Transverse colon (tissue), 4 donors: ENCODE measurements at regions of chr7 and their contacts with region 1.

Region 1: DNA sequence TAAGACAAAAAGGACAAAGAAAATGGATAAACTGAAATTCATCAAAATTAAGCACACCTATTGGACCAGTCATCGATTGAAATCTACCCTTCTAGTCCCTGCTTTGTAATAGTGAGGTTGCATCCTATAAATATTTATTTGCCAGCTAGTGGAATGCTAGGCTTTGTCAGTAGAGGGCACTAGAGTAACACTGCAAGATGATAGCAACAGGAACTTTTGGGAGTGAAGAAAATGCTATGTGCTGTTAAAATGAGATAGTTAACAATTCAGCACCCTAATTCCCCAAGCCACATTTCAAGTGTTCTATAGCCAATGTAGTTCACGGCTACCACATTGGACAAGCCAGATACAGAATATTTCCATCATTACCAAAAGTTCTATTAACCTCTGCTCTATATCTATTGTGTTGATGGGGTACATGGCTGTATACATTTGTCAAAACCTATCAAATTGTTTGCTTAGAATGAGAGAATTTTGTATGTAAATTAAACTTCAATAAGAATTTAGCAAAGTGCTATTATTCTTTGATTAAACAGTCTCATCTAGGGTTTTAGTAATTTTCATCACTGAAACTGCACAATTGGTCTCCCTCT is 69.8 kb downstream of the LSMEM1 start:
- DNase-seq: no peak
- H3K4me3 ChIP-seq: no peak overlapping the region
- H3K27ac ChIP-seq: no peak overlapping the region
- H3K4me1 ChIP-seq: no peaks in the 10 kb centered on the region
- H3K27me3 ChIP-seq: no peaks in the 10 kb centered on the region
- CTCF ChIP-seq: peak; percentile 85 to 91 (median 90)
- EP300 ChIP-seq: no peak
- POLR2A ChIP-seq: no peak

Region 2: DNA sequence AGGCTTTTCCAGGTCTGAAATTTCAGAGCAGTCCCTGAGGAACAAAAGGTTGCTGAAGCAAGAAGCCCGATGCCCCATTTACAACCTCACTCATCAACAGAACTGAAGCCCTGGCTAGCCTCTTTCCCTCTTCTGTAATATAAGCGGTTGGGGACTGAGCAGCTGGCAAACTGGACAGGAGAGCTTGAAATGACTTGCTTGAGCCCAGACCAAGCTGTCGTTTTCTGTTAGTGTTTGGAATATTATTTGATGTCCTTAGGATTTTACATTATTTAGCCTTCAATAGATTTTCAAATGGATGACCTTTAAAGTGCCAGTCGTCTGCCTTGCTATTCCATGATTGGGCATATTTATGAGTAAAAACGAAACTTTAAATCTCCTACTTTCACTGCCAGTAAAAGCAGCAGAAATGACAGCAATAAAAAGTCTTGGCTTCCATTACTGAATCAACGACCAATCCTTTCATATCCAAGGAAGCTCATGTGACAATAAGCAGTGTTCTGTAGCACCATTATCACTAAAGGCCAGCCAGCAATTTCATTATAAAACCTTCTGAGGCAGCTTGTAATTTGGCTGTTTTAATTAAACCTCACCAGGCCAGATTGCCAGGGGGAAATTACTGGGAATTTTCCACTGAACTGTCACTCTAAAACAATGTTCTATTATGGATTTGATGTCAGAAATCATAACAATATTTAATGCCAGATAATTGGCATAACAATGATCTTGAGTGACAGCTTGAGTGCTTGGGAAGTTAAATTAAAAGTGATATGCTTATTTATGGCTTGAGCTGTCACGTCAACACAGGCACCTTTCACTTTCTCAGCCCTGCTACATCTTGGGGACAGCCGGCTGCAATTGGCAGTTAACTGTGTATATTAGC is 16.1 kb after region 1 on chr7:
- in situ Hi-C with region 1: no loop called
- intact Hi-C with region 1: no loop called
- DNase-seq: peak; percentile 24
- H3K4me3 ChIP-seq: peak overlapping the region in 2 of 4 donors; percentile 3 to 17
- H3K27ac ChIP-seq: peak overlapping the region; percentile 48 to 68 (median 62)
- H3K4me1 ChIP-seq: peaks cover 0 to 35% (median 21%) of the 10 kb centered on the region in 4 donors
- H3K27me3 ChIP-seq: no peaks in the 10 kb centered on the region
- CTCF ChIP-seq: no peak
- EP300 ChIP-seq: no peak
- POLR2A ChIP-seq: no peak

Region 3: DNA sequence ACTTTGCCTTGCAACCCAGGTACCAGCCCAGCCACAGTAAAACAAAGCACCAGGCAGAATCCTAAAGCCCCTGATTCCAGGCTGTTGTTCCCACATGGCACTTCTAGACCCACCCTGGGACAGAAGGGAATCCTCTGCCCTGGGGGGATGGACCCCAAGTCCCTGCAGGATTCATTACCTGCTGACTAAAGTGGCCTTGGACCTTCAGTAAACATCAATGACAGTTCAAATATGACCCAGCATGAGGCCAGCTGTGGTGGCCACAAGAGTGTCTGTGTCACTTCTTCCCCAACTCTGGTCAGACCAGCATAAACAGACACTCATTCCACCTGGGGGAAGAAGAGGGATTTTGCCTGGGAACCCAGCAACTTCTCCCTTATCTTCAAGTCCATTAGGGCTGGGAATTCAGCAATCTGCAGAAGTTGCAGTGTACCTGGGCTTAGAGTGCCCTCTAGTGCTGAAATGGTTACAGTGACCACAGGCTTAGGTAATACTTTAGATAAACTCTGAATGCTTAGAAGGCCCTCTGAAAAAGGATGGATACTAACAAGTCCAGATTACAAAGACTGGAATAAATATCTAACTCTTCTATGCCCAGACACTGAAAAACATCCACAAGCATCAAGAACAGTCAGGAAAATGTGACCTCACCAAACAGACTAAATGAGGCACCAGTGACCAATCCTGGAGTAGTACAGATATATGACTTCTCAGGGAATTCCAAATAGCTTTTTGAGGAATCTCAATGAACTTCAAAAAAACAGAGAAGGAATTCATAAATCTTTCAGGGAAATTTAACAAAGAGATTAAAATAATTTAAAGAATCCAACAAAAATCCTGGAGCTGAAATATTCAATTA is 348.1 kb after region 1 on chr7:
- in situ Hi-C with region 1: loop called in 3 of 4 experiments (anchors 10 to 25 kb)
- intact Hi-C with region 1: no loop called
- DNase-seq: peak; percentile 63
- H3K4me3 ChIP-seq: no peak overlapping the region
- H3K27ac ChIP-seq: no peak overlapping the region
- H3K4me1 ChIP-seq: peaks cover 0 to 5% (median 2%) of the 10 kb centered on the region in 4 donors
- H3K27me3 ChIP-seq: no peaks in the 10 kb centered on the region
- CTCF ChIP-seq: peak; percentile 61 to 81 (median 72)
- EP300 ChIP-seq: no peak
- POLR2A ChIP-seq: no peak

Region 4: DNA sequence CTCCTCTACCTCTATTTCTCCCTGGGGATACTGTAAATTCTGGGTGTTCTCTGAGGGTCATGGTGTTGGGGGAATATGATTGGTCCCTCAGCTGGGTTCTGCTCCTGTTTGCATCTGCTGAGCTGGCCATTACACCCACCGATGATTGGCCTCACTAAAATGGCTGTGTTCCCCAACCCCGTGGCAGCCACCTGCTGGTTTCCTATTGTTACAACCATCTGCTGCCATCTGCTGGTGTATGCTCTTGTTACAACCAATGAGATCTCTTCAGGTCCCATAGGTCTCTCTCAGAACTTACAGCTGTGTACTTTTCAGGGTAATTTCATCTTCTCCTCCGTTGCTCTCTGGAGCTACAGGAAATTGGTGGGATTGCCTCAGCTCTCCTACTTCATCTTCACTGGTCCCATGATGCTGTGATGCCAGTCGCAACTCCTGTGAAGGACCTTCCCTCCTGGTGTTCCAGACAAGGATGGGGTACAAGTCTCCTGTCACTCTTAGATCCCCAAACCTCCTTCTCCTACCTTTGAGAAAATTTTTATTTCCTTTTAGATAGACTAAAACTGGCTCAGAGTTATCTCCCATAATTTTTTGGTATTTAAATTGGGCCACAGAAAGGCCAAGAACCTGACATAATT is 871.2 kb after region 1 on chr7:
- in situ Hi-C with region 1: loop called (anchors 10 to 25 kb)
- intact Hi-C with region 1: loop called (anchors 10 kb)
- DNase-seq: peak; percentile 77
- H3K4me3 ChIP-seq: no peak overlapping the region
- H3K27ac ChIP-seq: no peak overlapping the region
- H3K4me1 ChIP-seq: peaks cover 0 to 3% (median 0%) of the 10 kb centered on the region in 4 donors
- H3K27me3 ChIP-seq: no peaks in the 10 kb centered on the region
- CTCF ChIP-seq: peak; percentile 71 to 80 (median 77)
- EP300 ChIP-seq: no peak
- POLR2A ChIP-seq: no peak

Region 5: GRCh38 chr7:113460067-113460466 is 909.5 kb after region 1 on chr7:
- in situ Hi-C with region 1: no loop called
- intact Hi-C with region 1: no loop called
- DNase-seq: no peak
- H3K4me3 ChIP-seq: no peak overlapping the region
- H3K27ac ChIP-seq: no peak overlapping the region
- H3K4me1 ChIP-seq: no peaks in the 10 kb centered on the region
- H3K27me3 ChIP-seq: no peaks in the 10 kb centered on the region
- CTCF ChIP-seq: no peak
- EP300 ChIP-seq: no peak
- POLR2A ChIP-seq: no peak

Region 6: GRCh38 chr7:113710310-113711106 is 1159.9 kb after region 1 on chr7:
- in situ Hi-C with region 1: loop called in 1 of 4 experiments (anchors 25 kb)
- intact Hi-C with region 1: no loop called
- DNase-seq: peak; percentile 20
- H3K4me3 ChIP-seq: no peak overlapping the region
- H3K27ac ChIP-seq: no peak overlapping the region
- H3K4me1 ChIP-seq: no peaks in the 10 kb centered on the region
- H3K27me3 ChIP-seq: no peaks in the 10 kb centered on the region
- CTCF ChIP-seq: peak; percentile 65 to 94 (median 91)
- EP300 ChIP-seq: no peak
- POLR2A ChIP-seq: no peak